ENCODE measurements at regions of chr5 and their contacts with region 1.

Region 1: DNA sequence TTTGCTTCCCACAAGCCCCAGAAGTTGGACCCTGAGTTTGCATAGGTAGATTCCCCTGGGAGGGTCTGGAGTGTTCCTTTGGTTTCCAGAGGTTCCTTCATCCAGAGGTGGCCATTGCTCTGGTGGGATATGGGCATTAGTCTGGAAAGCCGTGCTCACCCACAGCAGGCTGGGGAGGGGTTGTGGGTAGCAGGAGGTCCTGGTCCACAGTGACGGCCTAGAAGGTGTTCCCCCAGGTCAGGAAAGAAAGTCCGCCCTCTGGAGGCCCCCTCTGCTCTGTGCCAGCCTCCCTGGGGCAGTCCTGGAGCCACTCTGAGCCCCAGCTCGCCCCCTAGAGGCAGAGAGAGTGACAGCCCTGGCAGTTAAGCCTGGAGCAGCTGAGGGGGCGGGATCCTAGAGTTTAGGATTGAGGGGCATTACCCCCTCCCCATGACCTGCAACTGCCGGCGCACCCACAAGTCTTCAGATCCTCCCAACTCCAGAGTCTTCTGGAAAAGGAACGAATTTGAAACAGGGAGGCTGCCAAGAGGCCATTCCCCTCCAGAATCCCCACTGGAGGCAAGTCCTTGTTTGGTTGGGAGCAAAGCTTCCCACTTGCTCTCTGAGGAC is 36.8 kb downstream of the NDST1 start:
- DNase-seq: peak; percentile 86
- ATAC-seq: peak; percentile 100
- H3K4me3 Mint-ChIP-seq: no peak overlapping the region
- H3K27ac Mint-ChIP-seq: no peak overlapping the region
- H3K4me1 Mint-ChIP-seq: no peaks in the 10 kb centered on the region
- H3K27me3 Mint-ChIP-seq: no peaks in the 10 kb centered on the region
- CTCF ChIP-seq: peak; percentile 81

Region 2: GRCh38 chr5:150458819-150459557 is 85.7 kb before region 1 on chr5:
- CTCF ChIA-PET with region 1: interaction called, 22 read pairs
- POLR2A ChIA-PET with region 1: no interaction called
- intact Hi-C with region 1: loop called (anchors 5 kb)
- DNase-seq: peak; percentile 88
- ATAC-seq: peak; percentile 92
- H3K4me3 Mint-ChIP-seq: no peak overlapping the region
- H3K27ac Mint-ChIP-seq: no peak overlapping the region
- H3K4me1 Mint-ChIP-seq: peaks cover 34% of the 10 kb centered on the region
- H3K27me3 Mint-ChIP-seq: no peaks in the 10 kb centered on the region
- CTCF ChIP-seq: peak; percentile 80

Region 3: GRCh38 chr5:150511578-150512367 is 32.9 kb before region 1 on chr5:
- CTCF ChIA-PET with region 1: no interaction called
- POLR2A ChIA-PET with region 1: no interaction called
- intact Hi-C with region 1: no loop called
- DNase-seq: no peak
- ATAC-seq: no peak
- H3K4me3 Mint-ChIP-seq: no peak overlapping the region
- H3K27ac Mint-ChIP-seq: no peak overlapping the region
- H3K4me1 Mint-ChIP-seq: no peaks in the 10 kb centered on the region
- H3K27me3 Mint-ChIP-seq: no peaks in the 10 kb centered on the region
- CTCF ChIP-seq: no peak

Region 4: DNA sequence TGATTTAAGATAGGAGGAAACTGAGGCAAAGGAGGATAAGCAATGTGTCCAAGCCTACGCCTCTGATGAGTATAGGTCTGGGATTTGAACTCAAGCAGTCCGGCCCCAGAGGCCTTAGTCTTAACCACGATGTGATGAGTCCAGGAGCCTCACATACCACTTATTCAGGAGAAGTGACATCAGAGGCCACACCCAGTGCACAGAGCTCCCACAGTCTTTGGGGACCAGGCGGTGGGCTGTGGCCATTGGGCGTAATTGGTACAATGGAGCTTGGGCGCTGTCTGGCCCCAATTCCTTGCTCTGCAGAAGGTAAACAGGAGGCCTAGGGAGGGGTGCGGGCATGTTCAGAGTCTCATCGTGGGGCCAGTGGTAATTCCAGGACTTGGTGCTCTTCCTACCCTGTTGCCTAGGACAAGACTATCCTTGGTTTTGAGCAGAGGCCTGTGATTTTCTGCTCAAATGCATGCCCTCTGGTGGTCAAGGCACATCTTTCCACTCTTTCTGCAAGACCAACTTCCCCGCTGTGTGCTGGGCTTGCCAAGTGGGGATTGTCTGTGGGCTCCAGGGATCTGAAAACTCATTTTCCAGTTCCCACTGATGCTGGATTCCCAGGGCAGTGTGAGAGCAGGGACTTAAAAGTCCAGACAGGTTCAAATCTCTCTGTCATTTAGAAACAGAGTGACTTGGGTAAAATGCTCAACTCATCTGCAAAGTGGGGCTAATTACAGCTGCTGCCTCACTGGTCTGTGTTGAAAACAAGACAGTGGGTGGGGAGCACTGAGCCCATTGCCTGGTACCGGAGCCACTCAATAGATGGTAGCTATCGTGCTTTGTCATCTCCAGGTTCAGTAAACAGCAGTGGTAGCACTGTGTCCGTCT is 21.0 kb before region 1 on chr5:
- CTCF ChIA-PET with region 1: interaction called, 10 read pairs
- POLR2A ChIA-PET with region 1: no interaction called
- intact Hi-C with region 1: no loop called
- DNase-seq: peak; percentile 35
- ATAC-seq: no peak
- H3K4me3 Mint-ChIP-seq: no peak overlapping the region
- H3K27ac Mint-ChIP-seq: no peak overlapping the region
- H3K4me1 Mint-ChIP-seq: no peaks in the 10 kb centered on the region
- H3K27me3 Mint-ChIP-seq: no peaks in the 10 kb centered on the region
- CTCF ChIP-seq: peak; percentile 35

Region 5: DNA sequence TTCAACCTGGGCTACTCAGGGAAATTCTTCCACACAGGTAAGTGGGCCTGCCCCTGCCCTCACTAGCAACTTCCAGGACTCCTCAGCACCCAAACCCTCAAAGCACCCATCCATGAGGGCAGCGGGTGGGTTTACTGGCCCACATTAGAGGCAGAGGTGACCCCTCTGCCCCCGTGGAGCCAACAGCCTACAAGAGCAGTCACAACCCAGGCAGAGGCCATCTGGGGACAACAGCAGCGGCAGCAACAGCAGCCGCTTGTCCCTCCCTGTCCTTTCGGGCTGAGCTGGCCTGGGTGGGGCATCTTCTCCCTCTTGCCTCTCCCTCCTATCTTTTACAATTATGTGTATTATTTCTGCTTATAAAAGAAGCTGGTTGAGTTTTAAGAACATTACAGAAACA is 11.7 kb before region 1 on chr5:
- CTCF ChIA-PET with region 1: interaction called, 21 read pairs
- POLR2A ChIA-PET with region 1: no interaction called
- intact Hi-C with region 1: no loop called
- DNase-seq: no peak
- ATAC-seq: no peak
- H3K4me3 Mint-ChIP-seq: no peak overlapping the region
- H3K27ac Mint-ChIP-seq: no peak overlapping the region
- H3K4me1 Mint-ChIP-seq: no peaks in the 10 kb centered on the region
- H3K27me3 Mint-ChIP-seq: no peaks in the 10 kb centered on the region
- CTCF ChIP-seq: no peak